GM12878 (cell line): ENCODE measurements at regions of chr13 and their contacts with region 1.

Region 1: GRCh38 chr13:39263033-39263432 is 224.8 kb downstream of the NHLRC3 start:
- DNase-seq: peak; percentile 9
- ATAC-seq: peak; percentile 89
- H3K4me3 ChIP-seq: no peak overlapping the region
- H3K27ac ChIP-seq: no peak overlapping the region
- H3K4me1 ChIP-seq: no peaks in the 10 kb centered on the region
- H3K27me3 ChIP-seq: no peaks in the 10 kb centered on the region
- CTCF ChIP-seq: peak; percentile 60 to 71 (median 70)
- EP300 ChIP-seq: no peak
- POLR2A ChIP-seq: no peak
- RAD21 ChIP-seq: peak; percentile 74

Region 2: GRCh38 chr13:39051157-39051556 is 211.9 kb before region 1 on chr13:
- CTCF ChIA-PET with region 1: interaction called, 5 read pairs
- POLR2A ChIA-PET with region 1: interaction called, 3 read pairs
- RAD21 ChIA-PET with region 1: interaction called, 9 read pairs
- SMC1A ChIA-PET with region 1: interaction called, 8 read pairs
- in situ Hi-C with region 1: no loop called
- intact Hi-C with region 1: loop called (anchors 1 kb)
- DNase-seq: no peak
- ATAC-seq: peak; percentile 54
- H3K4me3 ChIP-seq: no peak overlapping the region
- H3K27ac ChIP-seq: no peak overlapping the region
- H3K4me1 ChIP-seq: no peaks in the 10 kb centered on the region
- H3K27me3 ChIP-seq: no peaks in the 10 kb centered on the region
- CTCF ChIP-seq: peak; percentile 27 to 55 (median 31); a peak in 4 of 6 replicates
- EP300 ChIP-seq: no peak
- POLR2A ChIP-seq: no peak
- RAD21 ChIP-seq: peak; percentile 76

Region 3: GRCh38 chr13:39196958-39197646 is 65.9 kb before region 1 on chr13:
- CTCF ChIA-PET with region 1: no interaction called
- POLR2A ChIA-PET with region 1: no interaction called
- RAD21 ChIA-PET with region 1: no interaction called
- SMC1A ChIA-PET with region 1: interaction called, 14 read pairs
- in situ Hi-C with region 1: no loop called
- intact Hi-C with region 1: no loop called
- DNase-seq: no peak
- ATAC-seq: peak; percentile 86
- H3K4me3 ChIP-seq: no peak overlapping the region
- H3K27ac ChIP-seq: no peak overlapping the region
- H3K4me1 ChIP-seq: no peaks in the 10 kb centered on the region
- H3K27me3 ChIP-seq: no peaks in the 10 kb centered on the region; a peak in 1 of 4 replicates
- CTCF ChIP-seq: no peak
- EP300 ChIP-seq: peak; percentile 37 to 66; a peak in 2 of 4 replicates
- POLR2A ChIP-seq: no peak
- RAD21 ChIP-seq: no peak

Region 4: DNA sequence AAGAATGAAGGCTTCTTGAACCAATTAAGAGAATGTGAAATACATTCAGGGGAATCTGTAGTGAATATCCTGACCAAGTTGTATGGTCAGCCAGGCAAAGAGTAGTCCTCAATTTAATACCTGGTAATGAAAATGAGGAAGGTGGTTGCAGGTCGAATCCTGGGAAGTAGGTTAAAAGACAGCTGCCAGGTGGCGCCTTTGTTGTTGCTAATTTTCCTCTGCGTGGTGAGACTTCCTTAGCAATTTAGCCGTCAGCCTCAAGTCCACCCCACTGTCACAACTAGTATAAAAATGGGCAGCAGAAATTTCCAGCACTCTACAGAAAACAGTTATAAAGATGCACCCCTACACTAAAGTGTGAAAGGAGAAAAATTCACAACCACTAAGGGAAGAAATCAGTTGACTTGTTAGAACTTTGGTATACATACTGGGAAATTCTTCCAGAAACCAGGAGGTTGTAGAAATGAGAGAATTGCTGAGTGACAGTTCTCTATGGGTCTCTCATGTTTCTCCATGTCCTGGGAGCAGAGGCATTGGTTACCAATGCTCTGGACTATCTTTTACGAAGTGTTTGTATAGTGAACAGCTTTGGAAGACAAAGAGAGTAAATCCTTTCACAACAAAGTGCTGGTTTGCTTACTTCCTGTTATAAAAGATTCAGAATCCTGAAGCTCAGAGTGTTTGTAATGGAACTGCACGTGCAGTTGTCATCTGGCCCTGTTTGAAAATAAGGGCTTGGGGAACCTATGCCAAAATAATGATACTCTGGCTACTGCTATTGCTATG is 11.1 kb after region 1 on chr13:
- CTCF ChIA-PET with region 1: interaction called, 28 read pairs
- POLR2A ChIA-PET with region 1: no interaction called
- RAD21 ChIA-PET with region 1: no interaction called
- SMC1A ChIA-PET with region 1: interaction called, 11 read pairs
- in situ Hi-C with region 1: no loop called
- intact Hi-C with region 1: no loop called
- DNase-seq: no peak
- ATAC-seq: peak; percentile 47
- H3K4me3 ChIP-seq: no peak overlapping the region
- H3K27ac ChIP-seq: no peak overlapping the region
- H3K4me1 ChIP-seq: no peaks in the 10 kb centered on the region
- H3K27me3 ChIP-seq: no peaks in the 10 kb centered on the region
- CTCF ChIP-seq: peak; percentile 10 to 56 (median 28); a peak in 4 of 6 replicates
- EP300 ChIP-seq: no peak
- POLR2A ChIP-seq: no peak
- RAD21 ChIP-seq: peak; percentile 56

Region 5: DNA sequence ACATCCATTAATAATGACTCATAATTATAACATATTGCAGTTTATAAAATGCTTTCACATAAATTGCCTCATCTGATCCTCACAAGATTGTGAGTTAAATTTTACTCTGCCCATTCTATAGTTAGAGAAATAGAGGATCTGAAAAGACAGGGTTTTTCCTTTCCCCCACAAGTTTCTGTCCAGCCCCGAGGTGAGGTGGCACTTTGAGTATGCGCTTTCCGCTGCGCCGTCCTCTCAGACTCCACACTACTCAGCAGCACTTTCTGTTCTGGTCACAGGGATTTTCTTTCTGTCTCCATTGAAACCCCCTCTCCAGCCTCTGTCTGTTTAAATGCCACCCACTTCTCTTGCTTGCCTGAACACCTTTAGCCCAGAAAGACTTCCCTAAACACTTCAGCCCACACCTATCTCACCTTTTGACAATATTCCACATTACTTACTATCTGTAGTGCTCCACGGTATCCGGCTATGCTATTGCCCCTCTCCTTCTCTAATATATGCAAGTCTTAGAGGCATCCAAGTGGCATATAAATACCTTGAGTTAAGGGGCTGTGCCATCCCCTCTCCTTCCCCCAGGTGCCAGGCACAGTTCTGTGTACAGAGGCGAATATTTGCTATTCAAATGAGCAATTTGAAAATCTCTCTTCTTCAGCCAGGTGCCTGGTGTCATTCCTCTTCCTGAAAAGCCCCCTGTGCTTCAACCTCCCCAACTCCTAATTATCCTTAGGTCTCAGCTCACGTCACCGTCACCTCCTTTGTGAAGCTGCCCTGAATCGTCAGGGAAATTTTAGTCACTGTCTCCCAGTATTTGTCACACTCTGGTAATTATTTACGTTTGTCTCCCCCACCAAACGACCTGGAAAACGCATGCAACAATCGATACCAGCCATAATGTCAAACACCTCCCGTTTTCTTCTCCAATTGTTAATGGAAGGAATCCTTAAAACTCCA is 43.9 kb after region 1 on chr13:
- CTCF ChIA-PET with region 1: interaction called, 6 read pairs
- POLR2A ChIA-PET with region 1: interaction called, 3 read pairs
- RAD21 ChIA-PET with region 1: interaction called, 4 read pairs
- SMC1A ChIA-PET with region 1: interaction called, 3 read pairs
- in situ Hi-C with region 1: no loop called
- intact Hi-C with region 1: loop called (anchors 5 kb)
- DNase-seq: peak; percentile 73
- ATAC-seq: peak; percentile 98
- H3K4me3 ChIP-seq: no peak overlapping the region
- H3K27ac ChIP-seq: no peak overlapping the region
- H3K4me1 ChIP-seq: peaks cover 14% of the 10 kb centered on the region
- H3K27me3 ChIP-seq: no peaks in the 10 kb centered on the region
- CTCF ChIP-seq: no peak
- EP300 ChIP-seq: peak; percentile 6 to 90; a peak in 2 of 4 replicates
- POLR2A ChIP-seq: no peak
- RAD21 ChIP-seq: no peak

Region 6: GRCh38 chr13:39840201-39840600 is 577.2 kb after region 1 on chr13:
- CTCF ChIA-PET with region 1: no interaction called
- POLR2A ChIA-PET with region 1: no interaction called
- RAD21 ChIA-PET with region 1: no interaction called
- SMC1A ChIA-PET with region 1: no interaction called
- in situ Hi-C with region 1: no loop called
- intact Hi-C with region 1: no loop called
- DNase-seq: no peak
- ATAC-seq: no peak
- H3K4me3 ChIP-seq: no peak overlapping the region
- H3K27ac ChIP-seq: no peak overlapping the region
- H3K4me1 ChIP-seq: no peaks in the 10 kb centered on the region
- H3K27me3 ChIP-seq: no peaks in the 10 kb centered on the region
- CTCF ChIP-seq: no peak
- EP300 ChIP-seq: no peak
- POLR2A ChIP-seq: no peak
- RAD21 ChIP-seq: no peak